Activated CD8-positive, alpha-beta T cell treated with anti-CD3 and anti-CD28 coated beads for 36 hours (primary cell): ENCODE measurements at regions of chr15 and their contacts with region 1.

Region 1: DNA sequence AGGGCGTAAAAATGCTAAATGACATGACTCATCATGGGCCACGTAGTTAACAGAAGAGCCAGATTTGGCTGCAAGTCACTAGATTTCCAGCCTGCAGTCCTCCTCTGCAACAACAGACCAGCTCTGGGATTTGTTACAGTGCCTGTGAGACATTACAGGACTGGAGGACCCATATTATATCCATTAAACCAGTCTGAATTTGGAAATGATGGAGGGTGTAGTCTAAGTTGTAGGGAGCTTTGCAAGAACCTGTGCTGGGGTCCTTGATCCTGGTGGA is 10.8 kb downstream of the ZNF774 start:
- DNase-seq: no peak
- ATAC-seq: no peak
- H3K4me3 Mint-ChIP-seq: no peak overlapping the region
- H3K27ac Mint-ChIP-seq: no peak overlapping the region
- H3K4me1 Mint-ChIP-seq: peaks cover 25% of the 10 kb centered on the region
- H3K27me3 Mint-ChIP-seq: no peaks in the 10 kb centered on the region
- CTCF ChIP-seq: no peak

Region 2: DNA sequence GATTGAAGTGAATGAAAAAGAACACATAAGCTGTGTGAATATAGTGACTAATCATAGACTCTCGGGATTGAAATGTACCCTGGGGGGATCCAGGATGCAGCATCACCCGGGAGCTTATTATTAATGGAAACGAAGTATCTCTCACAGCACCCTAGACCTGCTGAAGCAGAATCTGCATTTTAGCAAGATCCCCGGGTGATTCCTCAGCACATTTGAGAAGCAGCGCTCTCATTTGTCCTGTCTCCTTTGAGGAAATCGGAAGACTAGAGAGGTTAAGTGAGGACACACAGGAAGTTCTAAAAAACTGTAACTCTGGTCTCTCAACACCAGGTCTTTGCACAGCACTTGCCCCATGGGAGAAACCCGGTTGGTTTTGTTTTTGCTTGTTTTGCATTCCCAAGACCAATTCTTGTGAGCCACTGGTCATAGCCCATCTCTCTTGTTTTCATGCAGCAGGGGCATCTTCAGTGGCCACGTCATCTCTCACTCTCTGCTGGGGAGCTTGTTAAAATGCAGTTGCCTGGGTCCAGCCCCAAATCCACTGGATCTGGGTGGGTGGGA is 331.6 kb before region 1 on chr15:
- CTCF ChIA-PET with region 1: no interaction called
- POLR2A ChIA-PET with region 1: no interaction called
- intact Hi-C with region 1: no loop called
- DNase-seq: peak; percentile 37
- ATAC-seq: peak; percentile 60
- H3K4me3 Mint-ChIP-seq: peak overlapping the region; percentile 7
- H3K27ac Mint-ChIP-seq: peak overlapping the region; percentile 81
- H3K4me1 Mint-ChIP-seq: peaks cover 55% of the 10 kb centered on the region
- H3K27me3 Mint-ChIP-seq: no peaks in the 10 kb centered on the region
- CTCF ChIP-seq: no peak

Region 3: GRCh38 chr15:90376789-90377188 is 13.9 kb after region 1 on chr15:
- CTCF ChIA-PET with region 1: interaction called, 29 read pairs
- POLR2A ChIA-PET with region 1: interaction called, 4 read pairs
- intact Hi-C with region 1: no loop called
- DNase-seq: peak; percentile 78
- ATAC-seq: peak; percentile 89
- H3K4me3 Mint-ChIP-seq: peak overlapping the region; percentile 16
- H3K27ac Mint-ChIP-seq: peak overlapping the region; percentile 96
- H3K4me1 Mint-ChIP-seq: peaks cover 38% of the 10 kb centered on the region
- H3K27me3 Mint-ChIP-seq: no peaks in the 10 kb centered on the region
- CTCF ChIP-seq: no peak

Region 4: GRCh38 chr15:90382305-90382704 is 19.4 kb after region 1 on chr15:
- CTCF ChIA-PET with region 1: interaction called, 29 read pairs
- POLR2A ChIA-PET with region 1: interaction called, 3 read pairs
- intact Hi-C with region 1: no loop called
- DNase-seq: no peak
- ATAC-seq: no peak
- H3K4me3 Mint-ChIP-seq: no peak overlapping the region
- H3K27ac Mint-ChIP-seq: no peak overlapping the region
- H3K4me1 Mint-ChIP-seq: peaks cover 24% of the 10 kb centered on the region
- H3K27me3 Mint-ChIP-seq: no peaks in the 10 kb centered on the region
- CTCF ChIP-seq: no peak

Region 5: DNA sequence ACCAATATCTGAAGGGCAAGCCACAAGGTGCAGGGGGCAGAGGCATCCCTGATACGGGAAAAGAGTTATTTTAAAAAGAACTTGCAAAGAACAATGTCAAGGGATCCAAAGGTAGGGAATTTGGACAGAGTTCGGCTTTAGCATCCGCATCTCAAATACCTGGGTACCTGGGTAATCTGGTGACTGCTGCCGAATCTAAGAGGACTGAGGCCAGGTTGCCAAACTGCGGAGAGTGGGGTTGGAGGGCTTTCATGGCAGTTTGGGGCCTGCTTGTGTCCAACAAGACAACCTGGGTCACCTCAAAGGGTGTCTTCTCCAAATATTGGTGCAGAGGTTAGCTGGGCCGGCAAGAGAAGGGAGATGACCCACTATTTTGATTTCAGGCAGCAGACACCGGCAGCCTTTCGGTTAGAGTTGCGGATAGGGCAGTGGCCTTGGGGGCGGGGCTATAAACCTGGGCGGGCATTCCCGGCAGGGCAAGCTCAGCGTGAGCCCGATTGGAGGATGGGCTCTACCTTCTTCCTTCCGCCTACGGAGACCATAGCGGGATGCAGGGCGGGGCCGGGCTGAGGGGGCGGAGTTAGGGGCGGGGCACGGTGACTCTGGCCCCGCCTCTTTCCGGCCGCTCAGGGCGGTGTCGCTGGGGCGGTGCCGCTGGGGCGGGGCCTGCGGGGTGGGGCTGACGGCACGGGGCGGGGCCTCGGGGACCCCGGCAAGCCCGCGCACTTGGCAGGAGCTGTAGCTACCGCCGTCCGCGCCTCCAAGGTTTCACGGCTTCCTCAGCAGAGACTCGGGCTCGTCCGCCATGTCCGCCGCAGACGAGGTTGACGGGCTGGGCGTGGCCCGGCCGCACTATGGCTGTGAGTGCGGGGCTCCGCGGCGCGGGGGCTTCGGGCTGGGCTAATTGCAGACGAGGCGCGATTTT is 24.9 kb after region 1 on chr15 and contains the start of gene IQGAP1:
- CTCF ChIA-PET with region 1: interaction called, 10 read pairs
- POLR2A ChIA-PET with region 1: interaction called, 7 read pairs
- intact Hi-C with region 1: no loop called
- DNase-seq: peak; percentile 99
- ATAC-seq: peak; percentile 94
- H3K4me3 Mint-ChIP-seq: peak within 1 kb of the TSS; percentile 88
- H3K27ac Mint-ChIP-seq: peak within 1 kb of the TSS; percentile 94
- H3K4me1 Mint-ChIP-seq: peaks cover 37% of the 10 kb centered on the region
- H3K27me3 Mint-ChIP-seq: no peaks in the 10 kb centered on the region
- CTCF ChIP-seq: no peak
- total RNA-seq, gene IQGAP1: 148 to 155 TPM

Region 6: DNA sequence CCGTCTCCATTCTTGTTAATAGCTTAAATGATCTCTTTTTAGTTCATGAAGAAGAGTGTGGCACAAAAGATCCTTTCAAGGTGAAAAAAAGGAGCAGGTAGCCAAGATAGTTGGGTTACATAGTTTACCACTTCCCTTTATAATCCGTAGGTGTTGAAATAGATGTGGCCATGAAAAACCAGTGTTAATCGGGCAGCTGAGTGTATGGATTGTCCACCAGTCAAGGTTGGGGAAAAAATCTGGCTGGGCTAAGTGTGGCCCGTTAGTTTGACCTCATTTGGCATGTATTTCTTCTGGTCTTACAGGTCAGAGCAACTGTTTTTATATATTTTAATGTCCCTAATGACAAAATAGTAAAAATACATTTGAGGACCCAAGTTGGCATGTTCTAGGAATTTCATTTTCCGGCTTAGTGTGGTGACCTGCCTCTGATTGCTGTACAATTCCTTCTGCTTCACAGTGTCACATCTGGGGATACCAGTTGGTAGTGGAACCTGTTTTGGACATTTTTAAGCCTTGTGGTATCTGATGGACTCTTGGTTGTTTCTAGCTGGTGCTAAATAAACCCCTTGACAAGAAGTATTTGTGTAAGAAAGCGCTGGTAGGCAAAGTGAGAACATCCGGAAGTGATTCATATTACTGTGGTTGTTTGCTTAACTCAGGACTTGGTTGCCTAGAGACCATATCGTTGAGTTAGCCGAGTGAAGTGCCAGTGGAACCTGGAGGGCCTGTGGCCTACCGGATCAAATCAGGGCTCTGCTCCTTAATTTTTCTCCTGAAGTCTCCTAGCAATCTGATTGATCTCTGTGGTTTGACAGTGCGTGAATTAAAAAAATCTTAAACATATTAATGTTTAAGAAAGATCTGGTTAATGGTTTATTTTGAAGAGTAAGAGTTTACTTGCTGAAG is 37.8 kb after region 1 on chr15:
- CTCF ChIA-PET with region 1: interaction called, 13 read pairs
- POLR2A ChIA-PET with region 1: no interaction called
- intact Hi-C with region 1: no loop called
- DNase-seq: peak; percentile 73
- ATAC-seq: peak; percentile 98
- H3K4me3 Mint-ChIP-seq: peak overlapping the region; percentile 44
- H3K27ac Mint-ChIP-seq: peak overlapping the region; percentile 95
- H3K4me1 Mint-ChIP-seq: peaks cover 60% of the 10 kb centered on the region
- H3K27me3 Mint-ChIP-seq: no peaks in the 10 kb centered on the region
- CTCF ChIP-seq: no peak

Region 7: DNA sequence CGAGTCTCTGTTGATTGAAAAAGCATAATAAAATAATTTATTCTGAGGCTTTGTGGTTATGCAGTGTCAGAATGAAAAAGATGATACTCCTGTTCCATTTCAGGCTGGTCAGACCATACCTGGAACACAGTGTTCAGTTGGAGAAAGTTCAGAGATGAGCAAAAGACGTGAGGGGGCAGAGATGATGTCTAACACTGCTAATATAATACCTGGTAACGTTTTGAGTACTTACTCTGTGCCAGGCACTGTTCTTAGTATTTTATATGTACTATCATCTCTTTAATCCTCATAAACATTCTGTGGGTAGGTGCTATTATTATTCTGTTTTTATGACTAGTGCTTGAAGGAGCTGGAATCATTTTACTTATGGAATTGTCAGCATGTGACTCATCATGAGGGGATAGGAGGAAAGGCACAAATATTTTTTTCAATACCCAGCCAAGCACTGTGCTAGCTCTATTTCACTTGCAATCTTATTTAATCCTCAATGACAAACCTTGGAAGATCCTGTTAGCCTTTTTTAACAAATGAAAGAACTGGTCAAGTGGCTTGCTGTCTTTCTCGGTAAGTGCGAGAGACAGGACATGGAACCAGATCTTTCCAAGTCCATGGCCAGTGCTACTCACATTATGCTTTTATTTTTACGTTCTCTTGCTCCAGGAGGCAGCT is 57.0 kb after region 1 on chr15:
- CTCF ChIA-PET with region 1: interaction called, 8 read pairs
- POLR2A ChIA-PET with region 1: interaction called, 4 read pairs
- intact Hi-C with region 1: loop called (anchors 5 kb)
- DNase-seq: peak; percentile 75
- ATAC-seq: peak; percentile 96
- H3K4me3 Mint-ChIP-seq: peak overlapping the region; percentile 50
- H3K27ac Mint-ChIP-seq: peak overlapping the region; percentile 95
- H3K4me1 Mint-ChIP-seq: peaks cover 74% of the 10 kb centered on the region
- H3K27me3 Mint-ChIP-seq: no peaks in the 10 kb centered on the region
- CTCF ChIP-seq: no peak